Endothelial cell of umbilical vein (primary cell): ENCODE measurements at regions of chr18 and their contacts with region 1.

Region 1: DNA sequence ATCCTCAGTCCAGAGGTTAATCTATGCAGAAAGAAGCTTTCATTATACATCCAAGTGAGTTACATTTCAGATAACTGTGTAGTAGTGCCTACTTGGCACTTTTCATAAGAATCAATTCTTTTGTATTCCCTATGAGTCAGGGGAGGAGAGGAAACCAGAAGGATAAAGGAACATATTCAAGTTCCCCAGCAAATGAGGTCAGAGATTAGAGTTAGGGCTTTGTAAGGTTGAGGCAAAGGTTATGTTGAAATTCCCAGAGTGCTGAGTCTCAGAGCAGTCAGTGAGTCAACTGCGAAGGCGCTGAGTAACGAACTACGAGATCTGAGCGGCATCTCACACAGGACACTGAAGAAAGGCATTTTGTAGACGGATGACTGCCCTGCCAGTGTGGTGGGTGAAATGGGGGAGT is 25.1 kb upstream of the ME2 start:
- DNase-seq: peak; percentile 18
- H3K4me3 ChIP-seq: no peak overlapping the region
- H3K27ac ChIP-seq: no peak overlapping the region
- H3K4me1 ChIP-seq: no peaks in the 10 kb centered on the region
- H3K27me3 ChIP-seq: no peaks in the 10 kb centered on the region
- CTCF ChIP-seq: no peak
- POLR2A ChIP-seq: no peak

Region 2: GRCh38 chr18:50769463-50769862 is 84.4 kb before region 1 on chr18:
- CTCF ChIA-PET with region 1: no interaction called
- POLR2A ChIA-PET with region 1: no interaction called
- dilution Hi-C with region 1: no loop called
- intact Hi-C with region 1: no loop called
- DNase-seq: no peak
- H3K4me3 ChIP-seq: no peak overlapping the region
- H3K27ac ChIP-seq: no peak overlapping the region
- H3K4me1 ChIP-seq: no peaks in the 10 kb centered on the region
- H3K27me3 ChIP-seq: no peaks in the 10 kb centered on the region
- CTCF ChIP-seq: no peak
- POLR2A ChIP-seq: no peak

Region 3: DNA sequence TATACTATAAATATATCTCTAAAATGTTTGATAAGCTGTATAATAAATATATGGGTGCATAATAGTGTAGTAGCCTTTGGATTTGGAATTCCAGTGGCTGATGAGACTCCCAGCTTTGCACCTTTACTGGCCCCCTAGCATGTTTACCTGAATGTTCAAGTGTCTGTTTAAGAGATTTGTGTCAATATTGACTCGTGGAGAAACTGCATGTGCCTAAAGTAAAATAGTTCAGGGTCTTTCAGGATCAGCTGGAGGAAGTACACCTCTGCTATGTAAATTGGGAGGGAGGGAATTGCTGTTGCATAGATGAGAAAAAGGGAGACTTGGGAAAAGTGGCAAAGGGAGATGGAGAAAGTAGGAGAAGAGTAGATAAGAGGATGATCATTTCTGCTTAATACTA is 48.9 kb after region 1 on chr18:
- CTCF ChIA-PET with region 1: no interaction called
- POLR2A ChIA-PET with region 1: no interaction called
- dilution Hi-C with region 1: no loop called
- intact Hi-C with region 1: loop called (anchors 1 kb)
- DNase-seq: no peak
- H3K4me3 ChIP-seq: no peak overlapping the region
- H3K27ac ChIP-seq: no peak overlapping the region
- H3K4me1 ChIP-seq: no peaks in the 10 kb centered on the region
- H3K27me3 ChIP-seq: no peaks in the 10 kb centered on the region
- CTCF ChIP-seq: no peak
- POLR2A ChIP-seq: no peak